Activated CD4-positive, alpha-beta memory T cell treated with anti-CD3 and anti-CD28 coated beads for 36 hours (primary cell): ENCODE measurements at regions of chr12 and their contacts with region 1.

Region 1: GRCh38 chr12:109775172-109775881 is 57.9 kb downstream of the TRPV4 start:
- DNase-seq: peak; percentile 80
- H3K4me3 Mint-ChIP-seq: no peak overlapping the region
- H3K27ac Mint-ChIP-seq: no peak overlapping the region
- H3K4me1 Mint-ChIP-seq: peaks cover 6% of the 10 kb centered on the region
- H3K27me3 Mint-ChIP-seq: peaks cover 2% of the 10 kb centered on the region

Region 2: GRCh38 chr12:109428037-109428629 is 347.2 kb before region 1 on chr12:
- CTCF ChIA-PET with region 1: interaction called, 16 read pairs
- POLR2A ChIA-PET with region 1: no interaction called
- intact Hi-C with region 1: loop called (anchors 1 kb)
- DNase-seq: peak; percentile 80
- H3K4me3 Mint-ChIP-seq: no peak overlapping the region
- H3K27ac Mint-ChIP-seq: no peak overlapping the region
- H3K4me1 Mint-ChIP-seq: peaks cover 1% of the 10 kb centered on the region
- H3K27me3 Mint-ChIP-seq: peaks cover 2% of the 10 kb centered on the region

Region 3: DNA sequence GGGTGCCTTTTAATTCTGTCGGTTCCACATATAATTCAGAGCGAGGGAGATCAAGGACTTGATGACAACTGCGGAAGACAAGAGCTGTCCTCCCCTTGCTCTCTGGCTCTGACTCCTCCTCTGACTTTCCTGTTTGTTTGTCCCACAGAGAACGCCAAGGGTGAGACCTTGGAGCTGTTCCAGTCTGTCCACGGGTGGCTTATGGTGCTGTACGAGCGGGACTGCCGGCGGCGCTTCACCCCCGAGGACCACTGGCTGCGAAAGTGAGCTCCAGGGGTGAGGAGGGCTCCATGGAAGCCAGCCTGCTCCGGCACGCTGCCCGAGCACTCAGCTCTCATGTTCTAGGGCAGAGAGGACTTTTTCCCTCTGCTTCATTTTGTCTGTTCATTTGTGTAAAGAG is 265.1 kb before region 1 on chr12:
- CTCF ChIA-PET with region 1: interaction called, 67 read pairs
- POLR2A ChIA-PET with region 1: no interaction called
- intact Hi-C with region 1: no loop called
- DNase-seq: no peak
- H3K4me3 Mint-ChIP-seq: no peak overlapping the region
- H3K27ac Mint-ChIP-seq: no peak overlapping the region
- H3K4me1 Mint-ChIP-seq: no peaks in the 10 kb centered on the region
- H3K27me3 Mint-ChIP-seq: no peaks in the 10 kb centered on the region

Region 4: GRCh38 chr12:109518820-109519665 is 256.3 kb before region 1 on chr12:
- CTCF ChIA-PET with region 1: interaction called, 67 read pairs
- POLR2A ChIA-PET with region 1: no interaction called
- intact Hi-C with region 1: loop called (anchors 1 kb)
- DNase-seq: peak; percentile 60
- H3K4me3 Mint-ChIP-seq: no peak overlapping the region
- H3K27ac Mint-ChIP-seq: no peak overlapping the region
- H3K4me1 Mint-ChIP-seq: no peaks in the 10 kb centered on the region
- H3K27me3 Mint-ChIP-seq: no peaks in the 10 kb centered on the region

Region 5: GRCh38 chr12:109763201-109763841 is 12.0 kb before region 1 on chr12:
- CTCF ChIA-PET with region 1: interaction called, 12 read pairs
- POLR2A ChIA-PET with region 1: no interaction called
- intact Hi-C with region 1: no loop called
- DNase-seq: peak; percentile 38
- H3K4me3 Mint-ChIP-seq: no peak overlapping the region
- H3K27ac Mint-ChIP-seq: no peak overlapping the region
- H3K4me1 Mint-ChIP-seq: peaks cover 4% of the 10 kb centered on the region
- H3K27me3 Mint-ChIP-seq: no peaks in the 10 kb centered on the region

Region 6: DNA sequence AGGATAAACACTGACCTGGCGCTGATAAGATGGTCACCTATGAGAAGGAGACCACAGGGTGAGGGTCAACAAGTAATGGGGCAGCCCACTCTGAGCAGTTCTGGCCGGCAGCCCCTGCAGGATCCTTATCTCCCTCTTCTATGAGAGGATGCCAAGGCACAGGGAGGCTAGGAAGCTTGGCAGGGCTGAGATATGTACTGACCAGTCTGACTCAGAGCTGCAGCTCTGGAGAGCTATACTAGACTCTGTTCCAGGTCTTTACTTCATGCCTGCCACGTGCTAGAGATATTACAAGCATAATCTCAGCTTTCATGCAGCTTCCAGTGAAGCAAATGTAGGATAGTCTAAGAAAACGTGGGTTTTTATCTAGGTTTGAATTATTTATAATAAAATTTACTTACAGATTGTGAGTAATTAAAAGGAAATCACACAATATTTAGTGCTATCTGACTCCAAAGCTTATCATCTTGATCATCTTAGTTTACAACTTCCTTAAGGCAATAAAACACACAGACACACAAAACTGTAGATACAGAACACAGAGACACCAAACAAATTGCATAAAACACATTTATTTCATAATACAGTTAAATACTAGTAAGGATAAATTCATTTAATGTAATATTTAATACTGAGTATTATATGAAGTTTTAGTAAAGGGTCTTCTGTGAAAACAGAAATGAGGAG is 188.6 kb after region 1 on chr12:
- CTCF ChIA-PET with region 1: no interaction called
- POLR2A ChIA-PET with region 1: no interaction called
- intact Hi-C with region 1: no loop called
- DNase-seq: no peak
- H3K4me3 Mint-ChIP-seq: no peak overlapping the region
- H3K27ac Mint-ChIP-seq: no peak overlapping the region
- H3K4me1 Mint-ChIP-seq: peaks cover 22% of the 10 kb centered on the region
- H3K27me3 Mint-ChIP-seq: no peaks in the 10 kb centered on the region